ENCODE measurements at regions of chr6 and their contacts with region 1.

Region 1: GRCh38 chr6:11093589-11094410 is at the start of gene SMIM13:
- DNase-seq: peak; percentile 89
- ATAC-seq: peak; percentile 94
- H3K4me3 ChIP-seq: peak within 1 kb of the TSS; percentile 81
- H3K27ac ChIP-seq: peak within 1 kb of the TSS; percentile 96
- H3K4me1 ChIP-seq: no peaks in the 10 kb centered on the region; the same call in 1 of the 2 replicates
- H3K27me3 ChIP-seq: no peaks in the 10 kb centered on the region
- CTCF ChIP-seq: peak; percentile 42 to 59 (median 51); a peak in 4 of 6 replicates
- EP300 ChIP-seq: 0 out of 4 replicates have a peak, but pooled peaks of 1 of the 2 experiments have one; percentile 23
- POLR2A ChIP-seq: peak; percentile 94
- RAD21 ChIP-seq: no peak
- polyA plus RNA-seq, gene SMIM13: 2.0 to 3.2 TPM

Region 2: DNA sequence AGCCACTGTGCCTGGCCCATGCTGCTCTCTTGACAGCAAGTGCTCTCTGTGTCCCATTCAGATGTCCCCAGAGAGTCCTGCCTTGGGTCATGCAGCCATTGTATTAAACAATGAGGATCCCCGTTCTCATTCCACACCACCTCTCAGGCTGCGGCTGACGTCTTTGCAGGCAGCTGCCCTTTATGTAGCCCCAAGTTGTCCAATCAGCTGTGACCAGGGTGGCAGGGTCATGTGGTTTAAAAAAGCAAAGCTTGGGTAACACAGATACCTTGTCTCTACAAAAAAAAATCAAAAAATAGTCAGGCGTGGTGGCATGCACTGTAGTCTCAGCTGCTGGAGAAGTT is 559.4 kb before region 1 on chr6:
- CTCF ChIA-PET with region 1: no interaction called
- POLR2A ChIA-PET with region 1: no interaction called
- RAD21 ChIA-PET with region 1: no interaction called
- SMC1A ChIA-PET with region 1: no interaction called
- in situ Hi-C with region 1: no loop called
- intact Hi-C with region 1: loop called (anchors 10 kb)
- DNase-seq: no peak
- ATAC-seq: peak; percentile 48
- H3K4me3 ChIP-seq: peak overlapping the region; percentile 64; the same call in 1 of the 2 replicates
- H3K27ac ChIP-seq: peak overlapping the region; percentile 72
- H3K4me1 ChIP-seq: peaks cover 18% of the 10 kb centered on the region
- H3K27me3 ChIP-seq: no peaks in the 10 kb centered on the region
- CTCF ChIP-seq: no peak
- EP300 ChIP-seq: no peak
- POLR2A ChIP-seq: 0 out of 2 replicates have a peak, but pooled peaks have one; percentile 23
- RAD21 ChIP-seq: no peak

Region 3: GRCh38 chr6:11111769-11112437 is 18.1 kb after region 1 on chr6:
- CTCF ChIA-PET with region 1: interaction called, 5 read pairs
- POLR2A ChIA-PET with region 1: interaction called, 8 read pairs
- RAD21 ChIA-PET with region 1: interaction called, 15 read pairs
- SMC1A ChIA-PET with region 1: interaction called, 20 read pairs
- in situ Hi-C with region 1: no loop called
- intact Hi-C with region 1: no loop called
- DNase-seq: no peak
- ATAC-seq: no peak
- H3K4me3 ChIP-seq: no peak overlapping the region
- H3K27ac ChIP-seq: no peak overlapping the region
- H3K4me1 ChIP-seq: no peaks in the 10 kb centered on the region
- H3K27me3 ChIP-seq: no peaks in the 10 kb centered on the region
- CTCF ChIP-seq: no peak
- EP300 ChIP-seq: no peak
- POLR2A ChIP-seq: no peak
- RAD21 ChIP-seq: no peak

Region 4: DNA sequence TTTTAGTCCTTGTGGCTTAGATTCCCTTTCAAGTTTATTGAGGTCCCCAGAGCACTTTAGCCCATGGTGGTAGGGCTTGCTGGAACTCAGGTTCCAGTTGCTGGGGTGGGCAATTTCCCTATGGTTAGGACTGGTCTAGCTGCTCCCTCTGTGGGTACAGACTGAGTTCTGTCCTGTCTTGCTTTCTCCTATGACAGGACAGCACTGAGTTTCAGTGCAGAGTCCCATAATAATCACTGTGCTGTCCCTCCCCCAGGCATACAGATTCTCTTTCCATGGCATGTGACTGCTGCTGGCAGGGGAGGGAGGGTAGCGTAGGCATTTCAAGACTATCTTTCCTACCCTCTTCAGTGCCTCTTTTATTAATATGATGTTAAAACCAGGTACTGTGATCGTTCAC is 34.8 kb after region 1 on chr6:
- CTCF ChIA-PET with region 1: no interaction called
- POLR2A ChIA-PET with region 1: interaction called, 11 read pairs
- RAD21 ChIA-PET with region 1: interaction called, 5 read pairs
- SMC1A ChIA-PET with region 1: interaction called, 9 read pairs
- in situ Hi-C with region 1: no loop called
- intact Hi-C with region 1: loop called (anchors 5 kb)
- DNase-seq: no peak
- ATAC-seq: 0 out of 3 replicates have a peak, but pooled peaks have one; percentile 20
- H3K4me3 ChIP-seq: no peak overlapping the region
- H3K27ac ChIP-seq: no peak overlapping the region
- H3K4me1 ChIP-seq: peaks cover 6% of the 10 kb centered on the region; the same call in 1 of the 2 replicates
- H3K27me3 ChIP-seq: no peaks in the 10 kb centered on the region
- CTCF ChIP-seq: no peak
- EP300 ChIP-seq: no peak
- POLR2A ChIP-seq: no peak
- RAD21 ChIP-seq: no peak

Region 5: DNA sequence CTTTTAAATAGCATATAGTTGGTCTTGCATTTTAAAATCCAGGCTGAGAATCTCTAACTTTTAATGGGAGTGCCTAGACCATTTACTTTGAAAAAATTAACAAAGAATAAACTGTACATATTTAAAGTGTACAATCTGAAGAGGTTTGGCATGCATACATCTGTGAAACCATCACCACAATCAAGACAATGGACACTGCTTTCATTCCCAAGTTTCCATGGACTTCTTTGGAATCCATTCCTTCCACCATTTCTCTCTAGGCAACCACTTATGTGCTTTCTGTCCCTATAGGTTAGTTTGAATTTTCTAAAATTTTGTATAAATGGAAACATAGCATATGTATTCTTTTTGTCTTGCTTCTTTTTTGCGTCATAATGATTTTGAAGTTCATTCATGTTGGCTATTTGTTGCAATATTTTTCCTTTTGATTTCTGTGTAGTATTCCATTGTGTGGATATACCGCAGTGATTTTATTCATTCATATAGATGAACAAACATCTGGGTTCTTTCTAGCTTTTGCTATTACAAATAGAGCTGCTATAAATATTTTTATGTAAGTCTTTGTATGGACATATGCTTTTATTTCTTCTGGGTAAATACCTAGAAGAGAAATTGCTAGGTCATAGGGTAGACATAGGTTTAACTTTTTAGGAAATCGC is 87.8 kb after region 1 on chr6:
- CTCF ChIA-PET with region 1: no interaction called
- POLR2A ChIA-PET with region 1: no interaction called
- RAD21 ChIA-PET with region 1: no interaction called
- SMC1A ChIA-PET with region 1: no interaction called
- in situ Hi-C with region 1: no loop called
- intact Hi-C with region 1: no loop called
- DNase-seq: no peak
- ATAC-seq: no peak
- H3K4me3 ChIP-seq: no peak overlapping the region
- H3K27ac ChIP-seq: no peak overlapping the region
- H3K4me1 ChIP-seq: no peaks in the 10 kb centered on the region
- H3K27me3 ChIP-seq: no peaks in the 10 kb centered on the region
- CTCF ChIP-seq: no peak
- EP300 ChIP-seq: no peak
- POLR2A ChIP-seq: no peak
- RAD21 ChIP-seq: no peak

Measured in GM12878 (cell line).